ENCODE measurements at regions of chr7 and their contacts with region 1.

Region 1: GRCh38 chr7:25098096-25099046 is 26.7 kb downstream of the CYCS start:
- DNase-seq: no peak
- H3K4me3 ChIP-seq: no peak overlapping the region
- CTCF ChIP-seq: peak; percentile 85

Region 2: DNA sequence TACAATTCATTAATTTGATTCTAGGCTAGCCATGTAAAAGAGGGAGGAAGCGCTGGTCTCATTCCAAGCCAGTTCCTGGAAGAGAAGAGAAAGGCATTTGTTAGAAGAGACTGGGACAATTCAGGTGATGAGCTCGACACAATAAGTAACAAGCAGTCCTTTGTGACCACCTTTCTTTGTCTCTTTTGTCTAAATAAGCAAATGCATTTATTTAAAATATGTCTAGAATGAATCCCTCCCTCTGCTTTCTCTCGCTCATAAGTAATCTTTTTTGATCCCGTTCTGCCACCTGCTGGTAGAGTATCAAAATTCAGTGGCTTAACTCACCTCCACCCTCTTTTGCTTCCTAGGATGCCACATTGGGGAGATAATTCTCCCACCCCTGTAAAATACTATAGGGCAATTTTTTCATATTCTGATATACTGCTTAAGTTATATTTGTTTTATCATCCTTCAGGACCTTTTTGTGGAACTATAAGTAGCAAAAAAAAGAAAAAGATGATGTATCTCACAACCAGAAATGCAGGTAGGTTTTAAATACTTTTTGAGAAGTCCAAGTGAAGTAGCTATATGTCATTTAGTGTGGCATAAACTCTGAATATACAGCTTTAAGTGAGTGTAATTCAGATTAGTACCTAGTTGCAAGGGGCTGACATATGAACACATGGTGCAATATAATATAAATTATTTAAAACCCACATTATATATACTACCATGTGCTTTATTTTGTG is 432.6 kb before region 1 on chr7:
- CTCF ChIA-PET with region 1: interaction called, 11 read pairs
- POLR2A ChIA-PET with region 1: no interaction called
- DNase-seq: no peak
- H3K4me3 ChIP-seq: no peak overlapping the region
- CTCF ChIP-seq: peak; percentile 57

Region 3: DNA sequence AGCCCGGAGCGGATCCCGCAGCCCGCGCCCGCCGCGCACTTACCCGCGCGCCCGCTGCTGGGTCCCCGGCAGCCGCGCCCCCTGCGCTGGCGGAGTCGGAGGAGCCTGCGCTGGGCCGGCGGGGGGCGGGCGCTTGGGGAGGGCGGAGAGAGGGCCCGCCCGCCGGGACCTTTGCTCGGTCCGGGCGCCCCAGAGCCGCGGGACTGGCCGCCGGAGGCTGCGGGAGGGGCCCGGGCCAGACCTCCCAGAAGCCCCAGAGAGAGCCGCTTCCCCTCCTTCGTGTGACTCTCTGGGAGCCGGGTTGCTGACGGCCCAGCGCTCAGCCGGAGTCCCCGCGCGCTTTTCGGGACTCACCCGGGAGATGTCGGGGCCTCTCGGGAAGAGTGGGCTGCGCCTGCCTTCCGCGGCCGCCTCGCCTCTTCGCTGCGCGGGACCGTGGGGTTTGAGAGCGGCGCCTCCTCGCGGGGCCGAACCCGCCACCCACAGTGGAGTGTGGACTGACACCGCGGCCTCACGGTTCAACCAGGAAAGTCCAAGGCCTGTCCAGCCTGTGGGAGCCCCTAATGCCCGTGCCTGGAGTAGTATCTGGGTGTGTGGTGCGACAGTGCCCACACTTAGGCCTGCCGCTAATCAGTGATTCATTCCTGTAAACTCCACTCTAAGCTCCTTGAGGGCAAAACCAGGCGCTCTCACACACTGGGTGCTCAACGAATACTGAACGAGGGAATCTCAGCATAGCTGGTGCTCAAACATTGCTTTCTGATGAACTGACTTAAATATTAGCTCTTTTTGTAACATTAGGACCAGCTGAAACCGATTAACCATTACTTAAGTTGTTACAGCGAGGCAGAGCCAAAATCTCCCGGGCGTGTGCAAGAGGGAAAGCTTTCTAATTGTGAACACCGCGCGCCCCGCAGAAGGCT is 340.8 kb before region 1 on chr7 and contains the start of gene GSDME:
- CTCF ChIA-PET with region 1: interaction called, 13 read pairs
- POLR2A ChIA-PET with region 1: no interaction called
- DNase-seq: no peak
- H3K4me3 ChIP-seq: peak within 1 kb of the TSS; percentile 69
- CTCF ChIP-seq: peak; percentile 2

Region 4: DNA sequence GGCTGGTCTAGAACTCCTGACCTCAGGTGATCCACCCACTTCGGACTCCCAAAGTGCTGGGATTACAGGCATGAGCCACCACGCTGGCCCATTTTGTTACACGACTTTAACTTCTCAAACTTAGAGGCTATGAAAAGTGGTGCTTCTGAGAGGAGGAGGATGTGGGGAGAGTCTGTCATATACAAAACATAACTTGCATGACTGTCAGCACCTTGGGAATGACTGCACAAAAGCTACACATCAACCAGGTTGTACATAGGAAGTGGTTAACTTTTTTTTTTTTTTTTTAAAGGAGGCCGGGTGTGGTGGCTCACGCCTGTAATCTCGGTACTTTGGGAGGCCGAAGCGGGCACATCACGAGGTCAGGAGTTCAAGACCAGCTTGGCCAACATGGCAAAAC is 297.7 kb before region 1 on chr7:
- CTCF ChIA-PET with region 1: interaction called, 928 read pairs
- POLR2A ChIA-PET with region 1: no interaction called
- DNase-seq: no peak
- H3K4me3 ChIP-seq: no peak overlapping the region
- CTCF ChIP-seq: no peak

Region 5: GRCh38 chr7:24877790-24878311 is 220.5 kb before region 1 on chr7:
- CTCF ChIA-PET with region 1: interaction called, 13 read pairs
- POLR2A ChIA-PET with region 1: no interaction called
- DNase-seq: no peak
- H3K4me3 ChIP-seq: no peak overlapping the region
- CTCF ChIP-seq: no peak

Region 6: DNA sequence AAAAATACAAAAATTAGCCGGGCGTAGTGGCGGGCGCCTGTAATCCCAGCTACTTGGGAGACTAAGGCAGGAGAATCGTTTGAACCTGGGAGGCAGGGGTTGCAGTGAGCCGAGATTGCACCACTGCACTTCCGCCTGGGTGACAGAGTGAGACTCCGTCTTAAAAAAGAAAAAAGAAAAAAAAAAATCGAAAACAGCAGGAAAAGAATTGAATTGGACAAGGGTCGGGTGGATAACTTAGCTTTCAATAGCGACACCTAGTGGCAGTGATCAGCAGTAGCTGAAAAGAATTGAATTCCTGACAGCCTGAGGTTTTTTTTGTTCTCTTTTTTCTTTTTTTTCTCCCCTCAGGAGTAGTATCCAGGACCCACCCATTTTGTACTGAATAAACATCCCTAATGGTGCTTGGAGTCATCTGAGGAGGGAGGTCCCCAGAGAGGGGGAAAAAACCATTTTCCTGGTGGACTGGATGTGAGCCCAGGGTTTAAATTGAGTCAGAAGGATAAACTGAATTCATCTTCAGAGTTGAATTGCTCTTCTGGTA is 28.4 kb before region 1 on chr7:
- CTCF ChIA-PET with region 1: interaction called, 171 read pairs
- POLR2A ChIA-PET with region 1: no interaction called
- DNase-seq: no peak
- H3K4me3 ChIP-seq: no peak overlapping the region
- CTCF ChIP-seq: peak; percentile 63

Region 7: DNA sequence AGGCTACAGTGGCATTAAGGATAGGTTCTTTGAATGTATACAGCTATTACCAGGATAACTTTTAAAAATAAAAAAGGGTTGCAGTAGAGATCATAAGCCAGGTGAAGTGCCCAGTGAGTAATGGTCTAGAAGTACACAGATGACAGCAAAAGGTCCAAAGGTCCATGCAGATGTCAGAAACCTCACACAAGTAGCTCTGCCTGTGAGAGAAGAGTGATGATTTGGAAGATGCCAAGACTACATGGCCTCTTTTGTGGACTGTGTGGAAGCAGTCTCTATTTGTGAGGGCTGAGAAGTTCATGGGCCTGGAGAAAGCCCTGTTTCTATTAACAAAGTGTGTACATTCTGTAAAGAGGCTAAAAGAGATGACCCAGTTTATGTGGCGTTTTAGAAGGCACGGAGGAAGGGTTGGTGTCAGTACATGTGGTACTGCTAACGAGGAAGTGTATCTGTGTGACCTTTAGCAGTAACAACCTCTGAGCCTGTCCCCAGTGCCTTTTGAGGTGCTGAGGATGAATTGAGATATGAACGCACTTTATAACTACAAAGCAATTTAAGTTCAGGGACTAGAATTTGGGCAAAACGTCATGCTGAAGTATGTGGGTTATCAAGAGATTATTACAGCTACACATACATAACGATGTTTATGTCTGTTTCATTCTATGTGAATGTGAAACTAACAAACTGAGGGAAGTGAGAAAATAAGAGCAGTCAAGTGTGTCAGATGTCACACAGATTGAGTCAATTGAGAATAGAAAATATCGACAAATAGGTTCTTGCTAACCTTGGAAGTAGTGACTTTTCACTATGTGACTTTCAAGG is 19.1 kb after region 1 on chr7:
- CTCF ChIA-PET with region 1: interaction called, 35 read pairs
- POLR2A ChIA-PET with region 1: no interaction called
- DNase-seq: no peak
- H3K4me3 ChIP-seq: no peak overlapping the region
- CTCF ChIP-seq: no peak

Region 8: DNA sequence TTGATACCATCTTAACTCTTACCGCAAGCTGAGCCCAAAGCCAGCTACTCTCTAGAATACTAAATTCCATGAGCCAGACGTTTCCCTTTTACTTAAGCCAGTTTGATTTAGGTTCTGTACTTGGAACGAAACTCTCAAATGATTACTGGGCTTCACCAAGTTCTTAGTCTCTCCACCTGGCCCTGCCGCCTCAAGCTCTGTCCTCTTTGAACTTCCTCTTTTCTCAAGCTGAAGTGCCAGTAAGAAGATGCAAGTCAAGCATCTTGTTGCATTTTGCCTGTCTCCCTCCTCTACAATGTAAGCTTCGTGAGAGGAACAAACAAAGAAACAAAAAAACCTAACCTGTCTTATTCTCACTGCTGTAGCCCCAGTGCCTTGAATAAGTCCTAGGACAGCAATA is 488.1 kb after region 1 on chr7:
- CTCF ChIA-PET with region 1: no interaction called
- POLR2A ChIA-PET with region 1: no interaction called
- DNase-seq: no peak
- H3K4me3 ChIP-seq: no peak overlapping the region
- CTCF ChIP-seq: no peak